ENCODE measurements at regions of chr2 and their contacts with region 1.

Region 1: DNA sequence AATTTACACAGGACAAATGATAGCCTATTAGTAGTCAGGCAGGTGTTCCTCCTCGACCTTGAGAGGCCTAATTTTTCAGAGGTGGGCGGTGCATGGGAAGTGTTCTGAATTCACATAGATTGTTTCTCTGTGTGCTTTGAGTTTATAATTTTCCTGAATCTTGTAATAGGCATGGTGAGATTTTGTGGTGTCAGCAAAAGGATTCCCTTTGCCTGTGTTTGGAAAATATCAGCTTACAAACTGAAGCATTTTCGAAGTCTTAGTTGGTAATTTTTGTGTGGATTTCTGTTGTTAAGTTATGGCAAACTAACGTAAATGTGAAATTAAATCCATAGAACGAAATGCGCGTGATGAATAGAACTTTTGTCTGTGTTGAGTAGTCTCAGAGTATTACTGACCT is 194.0 kb upstream of the RBMS1 start:
- DNase-seq: no peak

Region 2: DNA sequence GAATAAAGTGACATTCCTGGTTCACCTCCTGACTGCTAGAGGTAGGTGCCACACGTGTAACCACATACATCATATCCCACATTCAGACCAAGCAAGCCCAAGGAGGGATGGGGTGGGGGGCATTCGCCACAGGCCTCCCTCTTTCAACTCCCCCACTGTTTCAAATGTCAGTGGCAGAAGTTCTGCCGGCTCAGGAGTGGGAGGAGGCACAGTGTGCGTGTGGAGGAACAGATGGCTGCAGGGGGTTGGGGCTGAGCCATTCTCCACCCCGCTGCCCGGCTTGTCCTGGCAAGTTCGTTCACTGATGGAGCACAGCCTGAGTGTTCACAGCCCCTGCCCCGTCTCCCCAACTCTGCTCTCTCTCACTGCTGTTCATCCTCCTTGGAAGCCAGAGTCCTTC is 1794.6 kb before region 1 on chr2:
- intact Hi-C with region 1: loop called in 1 of 2 experiments (anchors 5 kb)
- DNase-seq: no peak

Measured in posterior vena cava (tissue), 2 donors.